Posterior cingulate gyrus (tissue), 11 donors: ENCODE measurements at regions of chr11 and their contacts with region 1.

Region 1: DNA sequence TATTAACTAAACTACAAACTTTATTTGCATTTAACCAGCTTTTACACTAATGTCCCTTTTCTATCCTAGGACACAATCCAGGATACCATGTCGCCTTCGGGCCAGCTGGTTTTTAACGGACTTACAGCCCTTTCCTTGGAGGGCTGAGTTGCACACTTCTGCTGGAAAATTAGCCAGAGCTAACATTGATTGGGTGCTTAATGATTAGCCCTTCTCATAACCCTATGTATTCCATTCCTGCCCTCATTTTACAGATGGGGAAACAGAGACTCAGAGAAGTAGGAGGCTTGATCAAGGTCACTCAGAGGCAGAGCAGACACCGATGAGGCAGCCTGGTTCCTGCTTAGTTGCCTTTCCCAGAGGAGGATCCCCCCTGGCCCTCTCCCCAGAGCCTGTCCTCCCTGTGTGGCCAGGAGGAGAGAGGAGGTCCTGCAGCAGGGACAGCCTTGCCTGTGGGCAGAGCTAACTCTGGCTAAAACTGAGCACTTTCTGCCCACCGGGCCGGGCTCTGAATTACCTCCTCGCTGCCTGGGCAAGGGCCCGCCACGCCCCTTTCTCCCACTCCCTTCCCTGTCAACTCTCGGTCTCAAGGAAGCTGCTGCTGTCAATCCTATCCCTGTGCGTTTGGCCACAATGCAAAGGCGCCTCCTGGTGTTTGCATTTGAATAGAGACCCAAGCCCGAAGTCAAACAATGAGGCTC is 59.6 kb upstream of the PAX6 start:
- DNase-seq: peak in 4 of 10 donors; percentile 25 to 87 (median 44)

Region 2: GRCh38 chr11:31107062-31107461 is 763.7 kb before region 1 on chr11:
- intact Hi-C with region 1: loop called (anchors 5 kb)
- DNase-seq: peak in 8 of 10 donors; percentile 24 to 93 (median 58)

Region 3: DNA sequence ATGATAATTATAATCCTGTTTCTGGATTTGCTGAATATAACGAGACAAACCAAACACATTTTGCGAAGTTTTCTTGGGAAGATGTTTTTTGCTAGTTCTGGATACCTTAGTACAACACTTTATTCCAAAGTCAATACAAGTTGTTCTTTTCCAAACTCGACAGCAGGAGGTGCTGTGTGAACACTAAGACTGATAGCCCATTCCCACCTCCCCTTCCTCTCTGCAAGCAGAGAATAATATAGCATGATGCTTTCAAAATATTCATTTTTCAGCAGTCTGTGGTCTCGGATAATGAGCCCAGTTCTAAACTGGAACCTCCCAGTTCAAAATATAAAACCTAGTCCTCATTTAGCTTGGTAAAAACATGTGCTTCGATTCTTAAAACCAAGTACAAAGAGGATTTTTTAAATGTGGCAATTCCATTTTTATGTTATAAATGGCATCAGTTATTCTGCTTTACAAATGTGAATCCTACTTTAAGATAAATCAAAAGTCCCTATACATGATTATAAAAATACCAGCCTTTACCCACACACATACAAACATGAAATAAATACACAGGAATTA is 630.3 kb before region 1 on chr11:
- intact Hi-C with region 1: loop called (anchors 5 kb)
- DNase-seq: peak in 3 of 10 donors; percentile 3 to 19 (median 16)

Region 4: DNA sequence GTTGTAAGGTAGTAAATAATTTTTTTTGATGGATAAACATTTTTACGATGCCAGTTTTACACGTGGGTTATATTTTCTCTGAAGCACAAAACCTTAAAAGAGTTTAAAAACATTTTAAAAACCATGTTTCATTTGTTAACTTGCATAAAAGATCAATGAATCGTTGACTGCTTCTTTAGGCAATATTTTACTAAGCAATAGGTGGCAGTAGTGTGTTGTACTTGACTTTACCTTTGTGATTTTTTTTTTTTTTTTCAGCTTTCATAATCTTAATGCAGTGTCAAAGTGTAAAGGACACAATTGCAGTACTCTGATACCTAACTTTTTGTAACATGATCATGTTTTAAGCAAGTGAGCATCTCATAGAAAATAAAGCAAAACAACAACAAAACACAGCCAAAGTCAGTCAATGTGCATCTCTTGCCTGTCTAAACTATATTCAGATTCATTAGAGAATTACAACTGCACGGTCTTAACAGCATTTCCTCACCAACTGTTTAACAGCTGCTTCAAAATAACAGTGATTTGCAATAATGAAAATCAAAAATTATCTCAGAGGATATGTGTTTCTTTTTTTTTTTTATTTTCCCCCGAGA is 473.4 kb before region 1 on chr11:
- intact Hi-C with region 1: loop called (anchors 1 kb)
- DNase-seq: no peak